ENCODE measurements at regions of chr6 and their contacts with region 1.

Region 1: DNA sequence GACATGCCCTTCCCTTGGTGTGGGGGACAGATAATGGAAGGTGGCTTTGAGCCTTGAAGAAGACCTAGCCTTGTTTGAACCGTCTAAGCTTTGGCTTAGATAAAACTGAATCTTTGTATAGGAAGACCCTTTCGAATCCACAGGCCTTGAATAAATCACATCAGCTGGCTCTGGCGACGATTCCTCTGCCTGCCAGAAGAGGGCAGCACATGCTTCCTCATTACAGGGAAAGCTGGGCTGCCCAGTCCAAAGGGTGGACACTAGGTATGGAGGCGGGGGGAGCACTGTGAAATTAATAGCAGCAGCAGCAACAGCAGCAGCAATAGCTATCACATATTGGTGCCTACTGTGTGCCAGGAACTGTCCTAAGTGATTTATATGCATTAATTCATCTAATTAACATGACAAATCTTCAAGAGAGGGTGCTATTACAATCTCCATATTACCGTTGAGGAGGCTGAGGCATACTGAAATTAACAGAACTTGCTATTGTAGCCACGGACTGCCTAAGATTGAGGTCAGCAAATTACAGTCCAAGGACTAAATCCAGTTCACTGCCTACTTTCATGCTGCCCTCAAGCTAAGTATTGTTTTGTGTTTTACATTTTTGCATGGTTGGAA is 85.1 kb downstream of the CLIC5 start:
- DNase-seq: peak; percentile 16 to 73 (median 57)
- ATAC-seq: peak; percentile 40
- H3K4me3 ChIP-seq: no peak overlapping the region
- H3K4me3 Mint-ChIP-seq: no peak overlapping the region
- H3K27ac ChIP-seq: no peak overlapping the region
- H3K27ac Mint-ChIP-seq: no peak overlapping the region
- H3K4me1 ChIP-seq: no peaks in the 10 kb centered on the region
- H3K4me1 Mint-ChIP-seq: no peaks in the 10 kb centered on the region
- H3K27me3 ChIP-seq: no peaks in the 10 kb centered on the region
- H3K27me3 Mint-ChIP-seq: no peaks in the 10 kb centered on the region
- CTCF ChIP-seq: peak; percentile 89

Region 2: GRCh38 chr6:45916692-45917091 is 13.8 kb before region 1 on chr6:
- CTCF ChIA-PET with region 1: interaction called, 16 read pairs
- POLR2A ChIA-PET with region 1: no interaction called
- intact Hi-C with region 1: no loop called
- DNase-seq: no peak
- ATAC-seq: no peak
- H3K4me3 ChIP-seq: no peak overlapping the region
- H3K4me3 Mint-ChIP-seq: no peak overlapping the region
- H3K27ac ChIP-seq: no peak overlapping the region
- H3K27ac Mint-ChIP-seq: no peak overlapping the region
- H3K4me1 ChIP-seq: no peaks in the 10 kb centered on the region
- H3K4me1 Mint-ChIP-seq: no peaks in the 10 kb centered on the region
- H3K27me3 ChIP-seq: no peaks in the 10 kb centered on the region
- H3K27me3 Mint-ChIP-seq: no peaks in the 10 kb centered on the region
- CTCF ChIP-seq: no peak

Region 3: GRCh38 chr6:45949256-45949655 is 18.7 kb after region 1 on chr6:
- CTCF ChIA-PET with region 1: interaction called, 18 read pairs
- POLR2A ChIA-PET with region 1: no interaction called
- intact Hi-C with region 1: no loop called
- DNase-seq: no peak
- ATAC-seq: no peak
- H3K4me3 ChIP-seq: no peak overlapping the region
- H3K4me3 Mint-ChIP-seq: no peak overlapping the region
- H3K27ac ChIP-seq: no peak overlapping the region
- H3K27ac Mint-ChIP-seq: no peak overlapping the region
- H3K4me1 ChIP-seq: no peaks in the 10 kb centered on the region
- H3K4me1 Mint-ChIP-seq: no peaks in the 10 kb centered on the region
- H3K27me3 ChIP-seq: no peaks in the 10 kb centered on the region
- H3K27me3 Mint-ChIP-seq: no peaks in the 10 kb centered on the region
- CTCF ChIP-seq: no peak

Region 4: DNA sequence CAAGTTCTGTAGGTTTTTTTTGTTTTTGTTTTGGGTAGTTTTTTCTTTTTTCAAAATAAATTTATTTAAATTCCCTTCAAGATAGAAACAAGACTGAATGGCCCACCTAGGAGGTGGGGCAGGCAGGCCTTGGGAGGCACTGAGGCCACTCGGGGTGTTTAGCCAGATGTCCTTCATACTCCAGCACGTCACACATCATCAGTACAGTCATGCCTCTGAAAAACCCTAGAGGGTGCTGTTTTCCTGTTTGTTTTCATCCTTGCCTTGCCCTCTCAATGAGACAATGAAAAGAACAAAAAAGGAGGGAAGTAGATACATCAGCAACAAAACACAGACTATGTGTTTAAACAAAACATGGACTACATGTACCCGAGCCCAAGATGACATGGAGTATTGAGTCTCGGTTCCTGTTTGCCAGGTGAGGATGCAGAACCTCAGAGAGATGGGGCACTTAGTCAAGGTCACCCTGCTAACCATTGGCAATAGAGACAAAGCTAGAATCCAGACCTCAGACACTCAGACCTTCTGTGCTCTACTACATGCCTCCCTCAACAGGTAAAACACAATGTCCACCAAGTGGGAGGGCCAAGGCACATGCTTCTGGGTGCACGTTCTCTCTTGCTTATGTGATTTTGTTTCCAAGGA is 111.9 kb after region 1 on chr6:
- CTCF ChIA-PET with region 1: interaction called, 3 read pairs
- POLR2A ChIA-PET with region 1: no interaction called
- intact Hi-C with region 1: loop called in 1 of 2 experiments (anchors 5 kb)
- DNase-seq: peak in 2 of 9 experiments; percentile 48 to 49
- ATAC-seq: peak; percentile 40
- H3K4me3 ChIP-seq: no peak overlapping the region
- H3K4me3 Mint-ChIP-seq: no peak overlapping the region
- H3K27ac ChIP-seq: no peak overlapping the region
- H3K27ac Mint-ChIP-seq: no peak overlapping the region
- H3K4me1 ChIP-seq: no peaks in the 10 kb centered on the region
- H3K4me1 Mint-ChIP-seq: no peaks in the 10 kb centered on the region
- H3K27me3 ChIP-seq: peaks cover 0 to 3% of the 10 kb centered on the region in 2 experiments
- H3K27me3 Mint-ChIP-seq: no peaks in the 10 kb centered on the region
- CTCF ChIP-seq: peak; percentile 66

Region 5: DNA sequence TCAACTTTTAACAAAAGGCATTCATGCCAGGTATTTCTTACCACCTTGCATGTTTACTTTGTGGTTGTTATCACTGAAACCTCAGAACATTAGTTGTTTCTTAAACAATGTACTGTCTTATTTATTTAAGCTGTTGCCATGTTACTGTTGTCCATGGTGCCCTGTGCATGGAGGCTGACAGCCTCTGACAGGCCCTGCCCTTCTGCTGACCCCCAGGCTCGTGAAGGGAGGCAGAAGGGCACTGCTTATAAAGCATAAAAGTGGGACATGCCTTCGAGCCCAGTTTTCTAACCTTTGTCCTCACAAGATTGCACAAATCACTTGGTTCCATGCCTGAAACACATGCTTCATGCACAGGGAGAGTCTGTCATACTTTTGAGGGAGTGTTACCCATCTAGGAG is 131.8 kb after region 1 on chr6:
- CTCF ChIA-PET with region 1: no interaction called
- POLR2A ChIA-PET with region 1: no interaction called
- intact Hi-C with region 1: no loop called
- DNase-seq: peak in 2 of 9 experiments; percentile 15 to 34
- ATAC-seq: no peak
- H3K4me3 ChIP-seq: no peak overlapping the region
- H3K4me3 Mint-ChIP-seq: no peak overlapping the region
- H3K27ac ChIP-seq: no peak overlapping the region
- H3K27ac Mint-ChIP-seq: no peak overlapping the region
- H3K4me1 ChIP-seq: no peaks in the 10 kb centered on the region
- H3K4me1 Mint-ChIP-seq: no peaks in the 10 kb centered on the region
- H3K27me3 ChIP-seq: no peaks in the 10 kb centered on the region
- H3K27me3 Mint-ChIP-seq: peaks cover 28% of the 10 kb centered on the region
- CTCF ChIP-seq: no peak

Region 6: GRCh38 chr6:46293641-46294316 is 363.2 kb after region 1 on chr6:
- CTCF ChIA-PET with region 1: no interaction called
- POLR2A ChIA-PET with region 1: no interaction called
- intact Hi-C with region 1: no loop called
- DNase-seq: no peak
- ATAC-seq: no peak
- H3K4me3 ChIP-seq: no peak overlapping the region
- H3K4me3 Mint-ChIP-seq: no peak overlapping the region
- H3K27ac ChIP-seq: no peak overlapping the region
- H3K27ac Mint-ChIP-seq: no peak overlapping the region
- H3K4me1 ChIP-seq: no peaks in the 10 kb centered on the region
- H3K4me1 Mint-ChIP-seq: no peaks in the 10 kb centered on the region
- H3K27me3 ChIP-seq: no peaks in the 10 kb centered on the region
- H3K27me3 Mint-ChIP-seq: peaks cover 9% of the 10 kb centered on the region
- CTCF ChIP-seq: no peak

Region 7: DNA sequence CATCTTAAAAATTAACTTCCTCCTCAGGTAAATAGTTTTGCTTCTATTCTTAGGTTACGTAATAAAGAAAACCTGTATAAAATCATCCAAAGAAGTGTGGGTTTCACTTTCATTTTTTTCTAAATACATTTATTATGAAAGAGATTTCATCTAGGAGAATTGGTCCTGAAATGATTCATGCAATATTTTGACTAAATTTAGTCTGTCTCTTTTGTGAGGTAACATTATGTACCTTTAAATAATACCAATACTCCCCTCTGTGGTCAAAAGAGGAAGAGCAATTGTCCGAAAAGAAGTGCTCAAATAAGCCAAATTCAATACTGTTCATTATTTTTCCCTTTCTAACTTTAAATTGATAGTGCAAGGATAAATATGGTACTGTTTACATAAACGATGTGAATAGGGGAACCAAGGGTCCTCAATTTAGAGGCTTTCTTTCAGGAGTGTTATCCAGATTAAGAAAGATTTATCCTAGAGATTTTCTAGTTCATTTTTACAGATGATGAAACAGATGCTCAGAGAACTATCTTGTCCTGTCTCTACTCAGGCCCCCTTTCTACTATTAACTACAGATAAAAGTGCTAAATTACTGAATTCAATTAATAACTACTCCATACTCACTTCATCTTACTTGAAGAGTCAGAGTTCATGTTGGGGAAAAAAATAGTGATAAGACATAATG is 695.8 kb after region 1 on chr6:
- CTCF ChIA-PET with region 1: no interaction called
- POLR2A ChIA-PET with region 1: no interaction called
- intact Hi-C with region 1: loop called (anchors 5 to 10 kb)
- DNase-seq: peak in 2 of 9 experiments; percentile 17 to 18
- ATAC-seq: no peak
- H3K4me3 ChIP-seq: no peak overlapping the region
- H3K4me3 Mint-ChIP-seq: no peak overlapping the region
- H3K27ac ChIP-seq: no peak overlapping the region
- H3K27ac Mint-ChIP-seq: no peak overlapping the region
- H3K4me1 ChIP-seq: peaks cover 7% of the 10 kb centered on the region
- H3K4me1 Mint-ChIP-seq: no peaks in the 10 kb centered on the region
- H3K27me3 ChIP-seq: no peaks in the 10 kb centered on the region
- H3K27me3 Mint-ChIP-seq: peaks cover 17% of the 10 kb centered on the region
- CTCF ChIP-seq: peak; percentile 15